Activated CD8-positive, alpha-beta T cell treated with anti-CD3 and anti-CD28 coated beads for 36 hours (primary cell): ENCODE measurements at regions of chr6 and their contacts with region 1.

Region 1: GRCh38 chr6:116531675-116532570 is 13.6 kb downstream of the TRAPPC3L start:
- DNase-seq: peak; percentile 81
- ATAC-seq: peak; percentile 91
- H3K4me3 Mint-ChIP-seq: no peak overlapping the region
- H3K27ac Mint-ChIP-seq: no peak overlapping the region
- H3K4me1 Mint-ChIP-seq: no peaks in the 10 kb centered on the region
- H3K27me3 Mint-ChIP-seq: peaks cover 10% of the 10 kb centered on the region
- CTCF ChIP-seq: peak; percentile 93

Region 2: DNA sequence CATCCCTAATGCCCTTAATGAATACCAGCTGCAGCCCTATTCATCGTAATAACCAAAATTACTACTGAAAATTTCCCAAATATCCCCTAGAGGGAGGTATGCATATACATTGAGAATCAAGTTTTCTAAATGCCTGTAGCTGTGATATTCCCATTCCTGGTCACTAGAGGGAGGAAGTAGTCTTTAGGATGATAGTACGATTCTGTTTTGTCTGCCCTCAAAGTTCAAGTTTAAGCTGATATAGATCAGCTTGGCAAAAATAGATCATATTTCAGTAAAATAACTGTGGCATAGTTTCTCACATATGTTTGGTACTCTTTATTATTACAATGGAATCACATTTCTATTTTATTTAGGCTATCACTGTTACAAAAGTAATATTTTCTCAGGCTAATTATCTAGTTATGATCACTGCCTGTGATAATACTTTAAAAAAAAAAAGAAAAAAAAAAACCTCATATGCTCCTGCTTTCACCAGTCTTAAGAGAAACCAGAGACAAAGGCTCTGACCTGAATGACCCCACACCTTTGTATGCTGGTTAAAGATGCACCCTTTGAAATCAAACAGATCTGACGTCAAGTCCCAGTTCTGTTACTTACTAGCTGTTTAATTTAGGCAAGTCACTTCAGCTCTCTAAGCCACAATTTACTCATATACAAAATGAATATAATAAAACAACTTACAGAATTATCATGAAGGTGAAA is 263.2 kb before region 1 on chr6:
- CTCF ChIA-PET with region 1: interaction called, 18 read pairs
- POLR2A ChIA-PET with region 1: no interaction called
- intact Hi-C with region 1: no loop called
- DNase-seq: no peak
- ATAC-seq: peak; percentile 68
- H3K4me3 Mint-ChIP-seq: no peak overlapping the region
- H3K27ac Mint-ChIP-seq: peak overlapping the region; percentile 43
- H3K4me1 Mint-ChIP-seq: peaks cover 33% of the 10 kb centered on the region
- H3K27me3 Mint-ChIP-seq: no peaks in the 10 kb centered on the region
- CTCF ChIP-seq: peak; percentile 66

Region 3: GRCh38 chr6:116444092-116444491 is 87.8 kb before region 1 on chr6:
- CTCF ChIA-PET with region 1: interaction called, 5 read pairs
- POLR2A ChIA-PET with region 1: no interaction called
- intact Hi-C with region 1: loop called (anchors 5 kb)
- DNase-seq: no peak
- ATAC-seq: peak; percentile 80
- H3K4me3 Mint-ChIP-seq: no peak overlapping the region
- H3K27ac Mint-ChIP-seq: no peak overlapping the region
- H3K4me1 Mint-ChIP-seq: peaks cover 9% of the 10 kb centered on the region
- H3K27me3 Mint-ChIP-seq: peaks cover 3% of the 10 kb centered on the region
- CTCF ChIP-seq: peak; percentile 60

Region 4: DNA sequence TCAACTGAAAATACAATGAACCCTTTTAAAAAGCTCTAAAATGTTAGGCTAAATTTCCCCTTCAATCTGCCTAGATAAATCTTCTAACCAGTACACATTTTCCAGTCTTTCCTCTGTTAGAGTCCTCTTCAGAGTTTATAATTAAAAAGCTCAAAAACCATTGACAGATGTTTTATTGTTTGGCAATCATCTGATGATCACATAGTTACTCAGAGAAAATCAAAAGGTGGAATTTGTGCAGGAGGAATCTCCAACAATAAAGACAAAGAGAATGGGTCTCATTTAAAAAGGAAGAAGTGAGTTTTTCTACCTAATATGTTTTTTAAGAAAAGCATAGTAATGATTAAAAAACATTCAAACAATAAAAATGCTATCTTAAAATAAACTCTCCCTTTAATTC is 10.5 kb after region 1 on chr6:
- CTCF ChIA-PET with region 1: interaction called, 12 read pairs
- POLR2A ChIA-PET with region 1: no interaction called
- intact Hi-C with region 1: no loop called
- DNase-seq: no peak
- ATAC-seq: no peak
- H3K4me3 Mint-ChIP-seq: no peak overlapping the region
- H3K27ac Mint-ChIP-seq: no peak overlapping the region
- H3K4me1 Mint-ChIP-seq: no peaks in the 10 kb centered on the region
- H3K27me3 Mint-ChIP-seq: peaks cover 13% of the 10 kb centered on the region
- CTCF ChIP-seq: no peak

Region 5: DNA sequence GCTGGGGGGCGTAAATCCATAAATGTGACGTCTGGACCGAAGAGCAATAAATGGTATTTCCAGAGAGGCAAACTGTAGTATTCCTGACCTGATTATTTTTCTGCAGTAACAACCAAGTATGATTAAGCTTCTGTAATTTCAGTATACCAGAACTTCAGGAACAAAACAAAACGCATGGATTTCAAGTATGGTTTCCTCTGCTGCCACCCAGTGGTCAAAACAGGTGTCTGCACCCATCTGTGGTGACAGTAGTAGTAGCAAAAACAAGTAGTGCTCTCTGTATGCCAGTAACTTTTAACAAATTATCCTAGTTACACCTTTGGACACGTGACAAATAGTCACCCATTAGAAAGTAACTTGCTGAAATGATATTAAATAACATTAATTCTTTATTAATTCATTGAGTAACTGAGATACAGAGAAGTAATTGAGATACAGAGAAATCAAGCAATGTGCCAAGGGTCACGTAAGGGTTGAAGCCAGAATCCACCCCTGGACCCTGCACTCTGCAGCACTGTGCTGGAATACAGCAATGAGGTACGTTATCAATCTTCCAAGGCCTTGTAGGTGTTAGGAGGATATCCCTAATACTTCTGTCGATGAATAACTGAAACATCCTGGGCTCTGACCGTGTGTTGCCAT is 29.6 kb after region 1 on chr6:
- CTCF ChIA-PET with region 1: interaction called, 27 read pairs
- POLR2A ChIA-PET with region 1: no interaction called
- intact Hi-C with region 1: no loop called
- DNase-seq: peak; percentile 84
- ATAC-seq: peak; percentile 83
- H3K4me3 Mint-ChIP-seq: no peak overlapping the region
- H3K27ac Mint-ChIP-seq: no peak overlapping the region
- H3K4me1 Mint-ChIP-seq: no peaks in the 10 kb centered on the region
- H3K27me3 Mint-ChIP-seq: peaks cover 2% of the 10 kb centered on the region
- CTCF ChIP-seq: peak; percentile 82

Region 6: DNA sequence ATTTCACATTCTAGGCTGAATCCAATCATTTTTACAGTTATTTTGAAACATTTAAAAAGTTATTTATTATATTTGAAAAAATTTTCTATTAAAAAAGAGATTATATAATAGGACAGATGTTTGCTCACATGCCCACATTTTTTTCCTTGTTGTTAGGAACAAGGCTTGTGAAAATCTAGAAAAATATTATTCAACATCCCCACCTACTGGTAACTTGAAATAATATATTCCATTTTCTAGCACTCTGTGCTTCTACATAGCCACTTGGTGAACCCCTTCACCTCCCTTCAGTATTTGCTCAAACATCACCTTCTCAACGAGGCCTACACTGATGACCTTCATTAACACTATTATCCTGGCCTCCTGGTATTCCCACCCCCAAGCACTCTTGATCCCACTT is 315.3 kb after region 1 on chr6:
- CTCF ChIA-PET with region 1: interaction called, 3 read pairs
- POLR2A ChIA-PET with region 1: no interaction called
- intact Hi-C with region 1: loop called (anchors 5 kb)
- DNase-seq: no peak
- ATAC-seq: no peak
- H3K4me3 Mint-ChIP-seq: no peak overlapping the region
- H3K27ac Mint-ChIP-seq: no peak overlapping the region
- H3K4me1 Mint-ChIP-seq: no peaks in the 10 kb centered on the region
- H3K27me3 Mint-ChIP-seq: no peaks in the 10 kb centered on the region
- CTCF ChIP-seq: peak; percentile 27